ENCODE measurements at regions of chr13 and their contacts with region 1.

Region 1: GRCh38 chr13:114226699-114227323 is 7.9 kb upstream of the CDC16 start:
- DNase-seq: peak; percentile 69
- H3K4me3 ChIP-seq: no peak overlapping the region
- H3K27ac ChIP-seq: no peak overlapping the region
- H3K4me1 ChIP-seq: peaks cover 4% of the 10 kb centered on the region
- H3K27me3 ChIP-seq: no peaks in the 10 kb centered on the region
- CTCF ChIP-seq: peak; percentile 97

Region 2: DNA sequence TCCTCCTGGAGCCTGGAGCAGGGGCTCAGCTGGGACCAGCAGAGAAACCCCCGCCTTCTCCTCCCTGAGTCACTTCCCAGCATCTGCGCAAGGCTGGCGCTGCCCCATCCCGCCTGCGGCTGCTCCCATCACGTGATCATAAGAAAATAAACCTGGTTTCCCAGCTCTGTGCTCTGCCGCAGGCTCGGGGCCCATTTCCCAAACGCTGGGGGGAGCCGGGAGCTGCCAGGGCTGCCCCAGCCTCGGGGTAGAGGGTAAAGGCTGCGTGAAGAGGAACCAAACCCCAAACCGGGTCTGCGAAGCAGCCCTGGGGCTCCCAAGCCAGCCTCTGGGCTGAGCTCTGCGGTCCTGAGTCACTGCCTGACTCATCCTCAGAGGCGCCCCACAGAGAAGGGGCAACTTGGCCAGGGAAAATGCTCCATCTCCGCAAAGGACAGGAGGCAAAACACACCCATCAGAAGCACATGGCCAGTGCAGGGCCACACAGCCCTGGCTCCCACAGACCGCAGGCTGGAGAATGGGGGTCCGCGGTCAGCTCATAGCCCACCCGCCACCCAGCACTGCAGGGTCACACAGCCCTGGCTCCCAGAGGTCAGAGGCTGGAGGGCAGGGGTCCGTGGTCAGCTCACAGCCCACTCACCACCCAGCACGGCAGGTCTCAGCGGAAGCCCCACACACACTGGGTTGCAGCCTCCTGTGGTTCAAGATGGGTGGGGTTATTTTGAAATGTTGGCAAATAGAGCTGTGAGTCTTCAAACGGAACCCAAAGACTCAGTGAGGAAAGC is 161.5 kb before region 1 on chr13:
- CTCF ChIA-PET with region 1: no interaction called
- dilution Hi-C with region 1: no loop called
- in situ Hi-C with region 1: no loop called
- intact Hi-C with region 1: loop called (anchors 1 kb)
- DNase-seq: peak; percentile 98
- H3K4me3 ChIP-seq: peak overlapping the region in 1 of 3 experiments; percentile 40
- H3K27ac ChIP-seq: peak overlapping the region; percentile 83
- H3K4me1 ChIP-seq: peaks cover 37% of the 10 kb centered on the region
- H3K27me3 ChIP-seq: no peaks in the 10 kb centered on the region
- CTCF ChIP-seq: no peak

Region 3: GRCh38 chr13:114124921-114125320 is 101.9 kb before region 1 on chr13:
- CTCF ChIA-PET with region 1: no interaction called
- dilution Hi-C with region 1: loop called (anchors 5 kb)
- in situ Hi-C with region 1: no loop called
- intact Hi-C with region 1: loop called (anchors 2 kb)
- DNase-seq: peak; percentile 79
- H3K4me3 ChIP-seq: no peak overlapping the region
- H3K27ac ChIP-seq: no peak overlapping the region
- H3K4me1 ChIP-seq: no peaks in the 10 kb centered on the region
- H3K27me3 ChIP-seq: no peaks in the 10 kb centered on the region
- CTCF ChIP-seq: no peak

Region 4: GRCh38 chr13:114132419-114133121 is 94.2 kb before region 1 on chr13 and contains the start of gene RASA3:
- CTCF ChIA-PET with region 1: no interaction called
- dilution Hi-C with region 1: no loop called
- in situ Hi-C with region 1: no loop called
- intact Hi-C with region 1: loop called (anchors 2 kb)
- DNase-seq: peak; percentile 71
- H3K4me3 ChIP-seq: peak within 1 kb of the TSS; percentile 33 to 64 (median 50)
- H3K27ac ChIP-seq: no peak within 1 kb of the TSS
- H3K4me1 ChIP-seq: peaks cover 16% of the 10 kb centered on the region
- H3K27me3 ChIP-seq: no peaks in the 10 kb centered on the region
- CTCF ChIP-seq: no peak
- total RNA-seq, gene RASA3: 5.2 to 8.4 TPM

Region 5: DNA sequence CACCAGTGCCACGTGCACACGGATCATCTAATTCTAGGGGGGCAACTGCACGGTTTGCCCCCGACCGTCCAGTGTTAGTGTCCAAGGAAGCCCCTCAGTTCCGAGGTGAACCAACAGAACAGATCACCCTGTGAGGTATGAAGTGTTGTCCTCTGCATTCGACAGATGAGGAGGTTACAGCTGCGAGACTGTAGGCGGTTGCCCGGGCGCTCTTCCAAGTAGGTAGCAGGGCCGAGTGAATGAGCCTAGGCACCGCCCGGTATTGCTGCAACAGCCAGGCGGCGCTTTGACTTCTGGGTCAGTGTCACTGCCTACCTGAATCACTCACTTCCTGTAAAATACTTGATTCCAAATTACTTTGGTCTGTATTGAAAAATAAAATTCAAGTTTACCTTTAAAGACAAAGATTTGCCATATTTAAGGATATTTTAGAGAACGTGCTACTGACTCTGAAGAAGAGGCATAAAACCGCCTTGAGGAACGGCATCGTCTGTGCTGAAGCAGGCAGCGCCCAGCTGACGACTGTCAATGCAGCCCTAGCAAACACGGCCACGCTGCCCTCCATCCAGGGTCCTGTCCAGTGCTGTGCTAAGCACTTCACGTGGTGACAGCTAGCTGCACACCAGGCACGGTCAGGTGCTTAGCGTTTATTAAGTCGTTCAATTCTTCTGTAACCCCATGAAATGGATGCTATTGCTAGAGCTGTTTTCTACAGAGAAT is 75.1 kb before region 1 on chr13:
- CTCF ChIA-PET with region 1: no interaction called
- dilution Hi-C with region 1: no loop called
- in situ Hi-C with region 1: no loop called
- intact Hi-C with region 1: loop called (anchors 2 kb)
- DNase-seq: peak; percentile 88
- H3K4me3 ChIP-seq: no peak overlapping the region
- H3K27ac ChIP-seq: no peak overlapping the region
- H3K4me1 ChIP-seq: peaks cover 14% of the 10 kb centered on the region
- H3K27me3 ChIP-seq: no peaks in the 10 kb centered on the region
- CTCF ChIP-seq: peak in 1 of 2 donors; percentile 37

Region 6: DNA sequence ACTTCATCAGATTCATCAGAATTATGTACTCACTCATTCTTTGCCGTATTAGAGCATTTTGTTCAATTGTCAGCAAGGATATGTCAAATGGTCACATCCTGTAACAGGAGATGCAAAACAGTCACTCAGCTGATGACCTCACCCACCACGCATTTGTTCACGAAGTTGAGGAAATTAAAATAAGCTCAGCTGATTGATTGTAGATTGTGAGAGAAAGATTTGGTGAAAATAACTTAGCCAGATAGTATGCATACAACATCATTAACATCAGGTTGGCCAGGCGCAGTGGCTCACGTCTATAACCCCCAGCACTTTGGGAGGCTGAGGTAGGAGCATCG is 14.7 kb before region 1 on chr13:
- CTCF ChIA-PET with region 1: no interaction called
- dilution Hi-C with region 1: no loop called
- in situ Hi-C with region 1: no loop called
- intact Hi-C with region 1: no loop called
- DNase-seq: no peak
- H3K4me3 ChIP-seq: no peak overlapping the region
- H3K27ac ChIP-seq: no peak overlapping the region
- H3K4me1 ChIP-seq: no peaks in the 10 kb centered on the region
- H3K27me3 ChIP-seq: no peaks in the 10 kb centered on the region
- CTCF ChIP-seq: no peak

Region 7: GRCh38 chr13:114237415-114238112 is 10.8 kb after region 1 on chr13:
- CTCF ChIA-PET with region 1: no interaction called
- dilution Hi-C with region 1: no loop called
- in situ Hi-C with region 1: no loop called
- intact Hi-C with region 1: no loop called
- DNase-seq: no peak
- H3K4me3 ChIP-seq: no peak overlapping the region
- H3K27ac ChIP-seq: no peak overlapping the region
- H3K4me1 ChIP-seq: no peaks in the 10 kb centered on the region
- H3K27me3 ChIP-seq: no peaks in the 10 kb centered on the region
- CTCF ChIP-seq: no peak

Measured in mammary epithelial cell (primary cell).